Panc1 (cell line): ENCODE measurements at regions of chr12 and their contacts with region 1.

Region 1: GRCh38 chr12:53352331-53353256 is 16.4 kb upstream of the SP7 start:
- DNase-seq: peak; percentile 84
- ATAC-seq: peak; percentile 99
- H3K4me3 ChIP-seq: no peak overlapping the region
- H3K27ac ChIP-seq: peak overlapping the region; percentile 75
- H3K4me1 ChIP-seq: peaks cover 7% of the 10 kb centered on the region
- H3K27me3 ChIP-seq: no peaks in the 10 kb centered on the region
- CTCF ChIP-seq: peak; percentile 89

Region 2: GRCh38 chr12:53418221-53418620 is 65.6 kb after region 1 on chr12:
- CTCF ChIA-PET with region 1: interaction called, 36 read pairs
- POLR2A ChIA-PET with region 1: interaction called, 7 read pairs
- in situ Hi-C with region 1: loop called (anchors 5 kb)
- intact Hi-C with region 1: loop called (anchors 2 kb)
- DNase-seq: no peak
- ATAC-seq: no peak
- H3K4me3 ChIP-seq: no peak overlapping the region
- H3K27ac ChIP-seq: no peak overlapping the region
- H3K4me1 ChIP-seq: peaks cover 16% of the 10 kb centered on the region
- H3K27me3 ChIP-seq: no peaks in the 10 kb centered on the region
- CTCF ChIP-seq: no peak

Region 3: DNA sequence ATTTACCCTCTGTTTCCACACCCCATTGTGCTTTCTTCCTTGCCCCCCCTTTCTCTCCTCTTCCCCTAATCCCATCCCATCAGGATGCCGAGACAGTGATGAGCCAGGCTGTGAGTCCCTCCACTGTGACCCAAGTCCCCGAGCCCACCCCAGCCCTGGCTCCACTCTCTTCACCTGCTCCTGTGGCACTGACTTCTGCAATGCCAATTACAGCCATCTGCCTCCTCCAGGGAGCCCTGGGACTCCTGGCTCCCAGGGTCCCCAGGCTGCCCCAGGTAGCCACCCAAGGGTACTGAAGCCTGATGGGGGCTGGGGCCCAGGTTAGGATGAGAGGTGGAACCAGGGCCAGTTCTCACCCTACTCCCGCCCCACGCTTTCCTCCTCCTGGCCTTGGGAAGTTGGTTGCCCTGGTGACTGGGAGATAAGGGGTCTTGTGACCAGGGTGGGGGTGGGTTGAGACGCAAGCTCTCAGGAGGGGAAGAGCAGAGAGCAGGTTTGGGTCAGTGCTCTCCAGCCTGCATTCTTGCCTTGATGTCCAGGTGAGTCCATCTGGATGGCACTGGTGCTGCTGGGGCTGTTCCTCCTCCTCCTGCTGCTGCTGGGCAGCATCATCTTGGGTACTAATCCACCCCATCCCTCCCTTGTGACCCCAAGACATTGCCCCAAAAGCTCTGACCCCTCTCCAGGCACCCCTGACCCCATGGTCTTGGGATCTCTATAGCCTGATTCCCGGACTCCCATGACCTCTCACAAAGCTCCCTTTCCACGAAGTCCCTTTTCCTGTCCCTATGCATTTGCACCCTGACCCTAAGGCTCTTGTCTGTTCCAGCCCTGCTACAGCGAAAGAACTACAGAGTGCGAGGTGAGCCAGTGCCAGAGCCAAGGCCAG is 72.3 kb after region 1 on chr12:
- CTCF ChIA-PET with region 1: interaction called, 36 read pairs
- POLR2A ChIA-PET with region 1: interaction called, 7 read pairs
- in situ Hi-C with region 1: loop called (anchors 5 kb)
- intact Hi-C with region 1: loop called (anchors 2 kb)
- DNase-seq: no peak
- ATAC-seq: no peak
- H3K4me3 ChIP-seq: no peak overlapping the region
- H3K27ac ChIP-seq: no peak overlapping the region
- H3K4me1 ChIP-seq: peaks cover 14% of the 10 kb centered on the region
- H3K27me3 ChIP-seq: no peaks in the 10 kb centered on the region
- CTCF ChIP-seq: no peak

Region 4: DNA sequence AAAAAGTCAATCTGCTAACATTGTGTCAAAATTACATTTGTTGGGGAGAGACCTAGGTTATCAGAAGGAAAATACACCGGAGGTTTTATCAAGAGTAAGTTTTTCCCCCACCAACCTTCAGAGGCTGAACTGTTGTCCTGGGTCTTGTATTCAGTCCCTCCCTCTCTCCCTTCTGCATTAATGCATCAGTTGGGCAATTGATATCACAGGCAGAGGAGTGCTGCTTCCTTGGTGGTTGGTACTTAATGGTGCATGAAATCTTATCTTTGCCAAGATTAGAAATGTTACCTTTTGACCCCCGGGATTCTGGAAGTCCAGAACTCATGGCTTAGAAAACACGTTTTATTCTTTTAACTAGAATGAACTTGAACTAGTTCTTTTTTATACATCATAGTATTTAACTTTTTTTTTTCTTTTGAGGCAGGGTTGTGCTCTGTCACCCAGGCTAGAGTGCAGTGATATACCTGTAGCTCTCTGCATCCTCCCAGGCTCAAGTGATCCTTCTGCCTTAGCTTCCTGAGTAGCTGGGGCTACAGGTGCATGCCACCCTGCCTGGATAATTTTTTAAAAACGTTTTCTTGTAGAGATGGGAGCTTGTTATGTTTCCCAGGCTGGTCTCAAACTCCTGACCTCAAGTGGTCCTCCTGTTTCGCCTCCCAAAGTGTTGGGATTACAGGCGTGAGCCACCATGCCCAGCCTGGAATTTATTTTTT is 104.2 kb after region 1 on chr12:
- CTCF ChIA-PET with region 1: no interaction called
- POLR2A ChIA-PET with region 1: no interaction called
- in situ Hi-C with region 1: no loop called
- intact Hi-C with region 1: no loop called
- DNase-seq: no peak
- ATAC-seq: no peak
- H3K4me3 ChIP-seq: no peak overlapping the region
- H3K27ac ChIP-seq: no peak overlapping the region
- H3K4me1 ChIP-seq: peaks cover 22% of the 10 kb centered on the region
- H3K27me3 ChIP-seq: no peaks in the 10 kb centered on the region
- CTCF ChIP-seq: no peak

Region 5: GRCh38 chr12:53481957-53482586 is 129.5 kb after region 1 on chr12:
- CTCF ChIA-PET with region 1: interaction called, 15 read pairs
- POLR2A ChIA-PET with region 1: no interaction called
- in situ Hi-C with region 1: no loop called
- intact Hi-C with region 1: no loop called
- DNase-seq: no peak
- ATAC-seq: peak; percentile 45
- H3K4me3 ChIP-seq: no peak overlapping the region
- H3K27ac ChIP-seq: no peak overlapping the region
- H3K4me1 ChIP-seq: peaks cover 15% of the 10 kb centered on the region
- H3K27me3 ChIP-seq: no peaks in the 10 kb centered on the region
- CTCF ChIP-seq: no peak